AG04449 (cell line): ENCODE measurements at regions of chr17 and their contacts with region 1.

Region 1: DNA sequence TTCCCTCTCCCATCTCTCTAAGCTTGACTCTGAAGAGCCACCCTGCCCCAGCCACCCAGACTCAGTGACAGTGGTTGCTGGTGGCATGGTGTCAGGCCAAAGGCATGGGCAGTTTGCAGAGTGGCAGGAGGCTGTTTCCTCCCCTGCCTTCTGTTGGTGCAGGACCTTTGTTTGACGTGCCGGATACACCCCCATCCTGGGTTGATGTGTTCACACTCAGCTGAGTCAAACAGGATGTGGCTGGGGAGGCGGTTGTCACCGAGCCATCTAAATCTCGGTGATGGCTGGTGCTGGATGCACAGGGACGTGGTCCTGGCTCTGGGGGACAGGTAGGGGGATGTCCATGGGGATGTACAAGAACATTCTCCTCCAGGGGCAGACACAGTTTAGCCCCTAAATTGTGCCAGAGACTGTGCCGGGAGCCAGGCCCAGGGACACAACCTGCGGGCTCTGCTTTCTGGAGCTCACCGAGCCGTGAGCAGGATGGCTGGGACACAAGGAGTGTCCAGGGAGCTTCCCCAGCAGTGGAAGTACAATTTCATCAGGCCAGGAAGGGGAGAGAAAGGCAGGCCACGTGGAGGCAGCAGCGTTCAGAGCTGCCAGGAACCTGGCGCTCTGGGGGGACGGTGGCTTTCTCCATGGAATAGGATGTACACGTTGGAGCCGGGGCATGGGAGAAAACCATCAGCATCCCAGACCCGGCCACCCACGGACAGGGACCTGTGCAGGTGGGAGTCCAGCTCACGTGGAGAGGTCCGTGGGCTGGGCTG is 264.2 kb downstream of the SEC14L1 start:
- DNase-seq: peak; percentile 33
- H3K4me3 ChIP-seq: no peak overlapping the region
- CTCF ChIP-seq: no peak

Region 2: DNA sequence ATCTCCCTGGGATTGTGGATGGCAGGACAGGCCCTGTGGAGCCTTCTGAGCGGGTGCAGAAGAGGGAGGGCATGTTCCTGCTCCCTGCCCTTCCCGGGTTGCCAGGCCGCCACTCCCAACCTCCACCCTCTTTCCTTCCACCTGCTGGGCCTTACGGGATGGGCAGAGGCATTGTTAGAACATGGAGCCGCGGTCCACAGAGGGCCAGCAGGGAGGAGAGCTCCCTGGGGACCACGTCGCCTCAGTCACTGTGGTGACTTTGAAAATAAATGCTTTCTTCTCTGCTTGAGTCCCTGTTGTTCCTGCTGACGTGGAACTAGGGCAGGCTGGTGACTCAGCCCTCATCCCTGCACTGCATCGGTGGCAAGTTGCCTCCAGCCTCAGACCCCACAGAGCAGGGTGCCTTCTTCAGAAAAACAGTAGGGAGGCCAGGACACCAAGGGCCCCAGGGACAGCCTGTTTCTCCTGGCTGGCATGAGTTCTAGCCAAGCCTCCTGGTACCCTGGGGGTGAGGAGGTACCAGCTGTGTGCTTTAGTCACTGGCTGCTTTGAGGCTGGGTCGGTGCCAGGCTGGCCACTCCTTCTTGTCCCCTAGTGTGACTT is 39.3 kb before region 1 on chr17:
- CTCF ChIA-PET with region 1: no interaction called
- POLR2A ChIA-PET with region 1: no interaction called
- DNase-seq: peak; percentile 63
- H3K4me3 ChIP-seq: no peak overlapping the region
- CTCF ChIP-seq: no peak

Region 3: GRCh38 chr17:77388384-77389311 is 16.3 kb before region 1 on chr17:
- CTCF ChIA-PET with region 1: interaction called, 12 read pairs
- POLR2A ChIA-PET with region 1: interaction called, 3 read pairs
- DNase-seq: no peak
- H3K4me3 ChIP-seq: peak overlapping the region; percentile 12; the same call in 1 of the 2 replicates
- CTCF ChIP-seq: no peak

Region 4: DNA sequence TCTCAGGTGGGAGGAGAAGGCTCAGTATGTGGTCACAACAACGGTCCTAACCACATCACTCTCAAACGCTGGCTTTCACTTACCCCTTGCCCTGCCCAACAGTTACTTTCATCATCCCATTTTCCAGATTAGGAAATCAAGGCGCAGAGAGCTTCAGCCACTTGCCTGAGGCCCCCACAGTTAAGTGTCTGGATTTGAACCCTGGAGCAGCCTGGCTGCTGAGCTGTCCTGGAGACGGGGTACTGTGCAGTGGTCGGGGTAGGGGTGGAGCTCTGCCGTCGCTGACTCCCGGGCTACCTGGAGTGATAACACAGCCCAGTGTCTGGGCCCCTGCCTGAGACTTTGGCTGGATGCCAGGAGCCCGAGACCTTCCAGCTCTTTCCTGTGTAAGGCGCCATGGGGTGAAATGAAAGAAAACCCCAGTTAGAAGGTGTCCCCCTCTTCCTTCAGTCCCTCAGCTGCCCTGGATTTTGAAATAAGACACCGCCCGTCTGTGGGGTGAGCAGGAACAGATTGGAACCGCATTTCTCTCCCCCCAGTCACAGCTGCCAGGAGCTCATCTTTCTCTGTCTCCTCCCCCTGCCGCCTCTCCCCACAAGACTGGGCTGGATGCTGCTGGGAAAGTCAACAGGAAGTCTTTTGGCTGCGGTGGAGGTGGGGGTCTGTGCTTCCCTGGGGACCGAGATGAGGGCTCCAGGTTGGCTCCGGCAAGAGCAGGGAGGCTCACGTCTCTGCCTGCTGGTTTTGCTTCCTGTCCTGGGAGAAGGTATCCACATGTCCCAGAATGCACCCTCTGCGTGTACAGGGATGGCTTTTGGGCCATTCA is 16.0 kb after region 1 on chr17:
- CTCF ChIA-PET with region 1: interaction called, 12 read pairs
- POLR2A ChIA-PET with region 1: interaction called, 3 read pairs
- DNase-seq: peak; percentile 64
- H3K4me3 ChIP-seq: peak overlapping the region; percentile 27; the same call in 1 of the 2 replicates
- CTCF ChIP-seq: no peak